Mammary epithelial cell (primary cell): ENCODE measurements at regions of chr4 and their contacts with region 1.

Region 1: GRCh38 chr4:155371432-155372043 is 5.2 kb downstream of the MAP9 start:
- DNase-seq: peak; percentile 5
- H3K4me3 ChIP-seq: no peak overlapping the region
- H3K27ac ChIP-seq: no peak overlapping the region
- H3K4me1 ChIP-seq: peaks cover 5% of the 10 kb centered on the region
- H3K27me3 ChIP-seq: no peaks in the 10 kb centered on the region
- CTCF ChIP-seq: peak; percentile 47 to 48

Region 2: DNA sequence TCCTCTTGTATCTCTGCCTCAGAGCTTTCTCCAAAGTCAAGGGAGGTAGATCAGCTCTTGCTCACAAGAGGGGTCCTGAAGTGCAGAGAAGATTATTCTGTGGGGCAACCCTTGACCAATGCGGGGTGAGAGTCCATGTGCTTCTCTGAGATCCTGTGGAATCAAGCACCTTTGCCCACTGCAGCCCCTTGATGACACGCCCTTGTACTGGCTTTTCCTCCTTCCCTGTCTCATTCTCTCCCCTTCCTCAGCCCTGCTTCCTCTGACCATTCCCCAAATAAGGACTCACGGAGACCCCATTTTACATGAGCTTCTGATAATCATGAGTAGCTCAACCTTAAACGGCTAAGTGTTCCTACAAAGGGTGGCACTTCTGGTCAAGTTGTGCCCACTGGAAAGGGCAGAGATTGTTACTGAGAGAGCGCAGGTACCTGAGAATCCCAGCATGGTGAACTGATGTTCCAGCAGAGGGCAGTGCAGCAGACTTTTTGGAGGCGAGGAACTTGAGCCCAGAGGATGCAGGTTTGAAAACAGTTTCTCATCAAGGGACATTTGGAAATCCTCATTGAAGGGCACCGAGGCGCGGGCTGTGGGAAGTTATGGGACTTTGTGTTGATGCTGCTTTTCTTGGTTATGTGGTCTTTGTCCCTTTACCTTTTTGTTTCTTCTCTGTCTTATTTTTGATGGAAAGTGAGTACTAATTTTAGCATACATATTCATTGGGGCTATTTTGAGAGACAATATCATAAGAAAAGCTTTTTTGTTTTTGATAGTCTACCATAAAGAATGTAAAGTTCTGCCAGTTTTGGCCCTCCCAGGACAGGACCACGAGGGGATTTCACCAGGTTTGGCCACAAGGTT is 389.1 kb before region 1 on chr4:
- CTCF ChIA-PET with region 1: no interaction called
- dilution Hi-C with region 1: no loop called
- in situ Hi-C with region 1: loop called (anchors 10 to 25 kb)
- intact Hi-C with region 1: loop called (anchors 1 kb)
- DNase-seq: peak; percentile 44
- H3K4me3 ChIP-seq: no peak overlapping the region
- H3K27ac ChIP-seq: no peak overlapping the region
- H3K4me1 ChIP-seq: no peaks in the 10 kb centered on the region
- H3K27me3 ChIP-seq: no peaks in the 10 kb centered on the region
- CTCF ChIP-seq: peak; percentile 77 to 84

Region 3: DNA sequence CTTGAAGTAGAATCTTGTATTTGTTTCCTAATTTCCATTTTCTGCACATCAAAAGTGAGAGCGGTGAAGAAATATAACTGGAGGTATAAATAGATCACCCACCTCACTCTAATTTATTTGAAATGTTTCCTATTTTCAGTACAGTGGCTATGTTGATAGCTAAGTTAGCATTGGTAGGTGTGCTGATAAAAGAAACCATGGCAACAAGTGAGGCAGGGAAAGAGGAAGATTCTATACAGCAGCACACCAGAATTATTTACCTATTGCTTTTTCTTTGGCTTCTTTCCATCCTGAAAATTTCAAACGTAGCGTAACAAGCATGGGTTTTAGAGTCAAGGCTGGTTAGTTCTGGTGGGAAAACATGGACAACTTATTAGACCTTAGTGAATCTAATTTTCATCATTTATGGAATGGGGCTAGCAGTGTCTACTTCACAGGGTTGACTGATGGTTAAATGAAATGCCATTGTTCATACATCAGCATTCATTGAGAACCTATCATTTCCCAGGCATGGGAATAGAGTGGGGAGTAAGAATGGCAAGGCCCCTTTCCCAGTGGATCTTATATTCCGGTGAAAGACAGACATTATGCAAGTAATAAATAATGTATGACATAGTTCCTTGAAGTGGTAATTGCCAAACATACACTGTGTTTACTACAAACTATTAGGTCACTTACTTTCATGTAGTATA is 612.7 kb after region 1 on chr4:
- CTCF ChIA-PET with region 1: no interaction called
- dilution Hi-C with region 1: no loop called
- in situ Hi-C with region 1: no loop called
- intact Hi-C with region 1: no loop called
- DNase-seq: no peak
- H3K4me3 ChIP-seq: no peak overlapping the region
- H3K27ac ChIP-seq: no peak overlapping the region
- H3K4me1 ChIP-seq: no peaks in the 10 kb centered on the region
- H3K27me3 ChIP-seq: no peaks in the 10 kb centered on the region
- CTCF ChIP-seq: no peak